H1 (cell line): ENCODE measurements at regions of chr9 and their contacts with region 1.

Region 1: GRCh38 chr9:127450830-127451724 is at the starts of genes LRSAM1 and RPL12:
- DNase-seq: peak; percentile 91 to 100
- H3K4me3 ChIP-seq: peak within 1 kb of the TSS; percentile 85 to 99 (median 88)
- H3K27ac ChIP-seq: peak within 1 kb of the TSS; percentile 86
- H3K4me1 ChIP-seq: peaks cover 0 to 6% (median 4%) of the 10 kb centered on the region in 4 experiments; a peak in 4 of 7 replicates
- H3K27me3 ChIP-seq: no peaks in the 10 kb centered on the region
- CTCF ChIP-seq: no peak
- EP300 ChIP-seq: no peak
- POLR2A ChIP-seq: peak; percentile 100
- RAD21 ChIP-seq: no peak
- total RNA-seq, gene LRSAM1: 18.3 and 18.8 TPM in 2 replicates
- total RNA-seq, gene RPL12: 1,993 and 2,006 TPM in 2 replicates

Region 2: DNA sequence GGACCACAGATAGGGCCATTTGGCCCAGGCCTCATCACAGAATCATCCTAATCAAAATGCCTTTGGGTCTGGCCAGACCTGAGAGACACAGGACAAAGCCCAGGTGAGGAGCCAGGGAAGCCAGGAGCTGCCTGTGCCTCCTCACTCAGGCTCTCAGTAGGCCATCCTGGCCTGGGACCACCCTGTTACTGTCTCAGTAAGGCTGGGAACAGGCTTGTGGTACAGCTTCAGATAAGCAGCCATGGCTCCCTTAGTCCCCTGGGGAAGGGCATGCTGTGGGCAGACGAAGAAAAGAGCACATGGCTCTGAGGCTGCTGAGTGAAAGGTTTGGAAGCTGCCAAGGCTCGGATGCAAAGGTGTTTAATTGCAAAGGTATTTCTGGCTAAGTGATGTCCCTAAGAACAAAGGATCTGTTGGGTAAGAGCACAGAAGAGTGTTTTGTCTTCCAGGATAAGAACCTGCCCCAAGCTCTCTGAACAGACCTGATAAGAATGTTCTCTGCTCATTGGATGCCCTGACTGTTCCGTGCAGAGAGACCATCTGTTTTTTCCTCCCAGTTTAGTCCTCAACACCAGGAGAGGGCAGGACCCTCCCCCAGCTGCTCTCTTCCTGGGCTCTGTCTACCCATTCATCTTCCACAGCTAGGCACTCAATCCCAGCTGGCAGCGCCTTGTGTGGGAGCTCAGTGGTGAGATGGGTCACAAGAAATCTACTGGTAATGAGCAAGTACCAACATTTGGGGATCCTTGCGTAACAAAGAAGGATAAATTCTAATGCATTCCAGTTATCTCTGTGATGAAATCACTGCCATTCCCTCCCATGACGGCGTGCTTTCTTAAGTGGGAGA is 346.4 kb before region 1 on chr9:
- CTCF ChIA-PET with region 1: no interaction called
- POLR2A ChIA-PET with region 1: no interaction called
- DNase-seq: no peak
- H3K4me3 ChIP-seq: no peak overlapping the region
- H3K27ac ChIP-seq: no peak overlapping the region
- H3K4me1 ChIP-seq: no peaks in the 10 kb centered on the region; a peak in 1 of 7 replicates
- H3K27me3 ChIP-seq: no peaks in the 10 kb centered on the region
- CTCF ChIP-seq: no peak
- EP300 ChIP-seq: no peak
- POLR2A ChIP-seq: no peak
- RAD21 ChIP-seq: no peak

Region 3: GRCh38 chr9:127224178-127224882 is 226.7 kb before region 1 on chr9:
- CTCF ChIA-PET with region 1: no interaction called
- POLR2A ChIA-PET with region 1: interaction called, 12 read pairs
- DNase-seq: peak; percentile 94 to 100
- H3K4me3 ChIP-seq: peak overlapping the region; percentile 55 to 80 (median 76)
- H3K27ac ChIP-seq: peak overlapping the region; percentile 80; the same call in 1 of the 2 replicates
- H3K4me1 ChIP-seq: peaks cover 0 to 13% (median 8%) of the 10 kb centered on the region in 4 experiments; a peak in 5 of 7 replicates
- H3K27me3 ChIP-seq: peaks cover 2 to 15% (median 13%) of the 10 kb centered on the region in 4 experiments; a peak in 6 of 7 replicates
- CTCF ChIP-seq: no peak
- EP300 ChIP-seq: no peak
- POLR2A ChIP-seq: peak; percentile 37 to 72; a peak in 2 of 3 replicates
- RAD21 ChIP-seq: peak in 1 of 2 experiments; percentile 24; a peak in 2 of 4 replicates

Region 4: DNA sequence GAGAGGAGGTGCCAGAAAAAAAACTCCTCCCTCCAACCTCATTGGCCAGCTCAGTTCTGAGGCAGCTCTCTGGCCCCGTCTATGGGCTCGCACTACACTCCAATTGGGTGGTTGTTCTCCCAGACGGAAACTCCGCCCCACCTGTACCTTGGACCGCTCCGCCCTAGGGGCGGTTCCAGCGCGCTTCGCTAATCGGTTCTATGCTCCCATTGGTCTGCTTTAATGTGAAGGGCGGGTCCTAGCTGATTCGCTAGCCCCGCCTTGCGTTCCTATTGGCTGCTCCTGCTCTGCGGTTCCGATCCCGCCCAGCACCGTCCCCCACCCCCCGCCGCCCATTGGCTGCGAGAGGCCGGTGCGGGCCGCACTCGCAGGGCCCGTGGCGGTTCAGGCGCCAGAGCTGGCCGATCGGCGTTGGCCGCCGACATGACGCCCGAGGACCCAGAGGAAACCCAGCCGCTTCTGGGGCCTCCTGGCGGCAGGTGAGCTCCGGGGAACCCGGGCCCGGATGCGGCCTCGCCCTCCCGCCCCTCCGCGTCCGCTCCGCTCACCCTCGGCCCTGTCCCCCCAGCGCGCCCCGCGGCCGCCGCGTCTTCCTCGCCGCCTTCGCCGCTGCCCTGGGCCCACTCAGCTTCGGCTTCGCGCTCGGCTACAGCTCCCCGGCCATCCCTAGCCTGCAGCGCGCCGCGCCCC is 54.1 kb before region 1 on chr9 and contains the start of gene SLC2A8:
- CTCF ChIA-PET with region 1: interaction called, 4 read pairs
- POLR2A ChIA-PET with region 1: interaction called, 24 read pairs
- DNase-seq: peak; percentile 97 to 99
- H3K4me3 ChIP-seq: peak within 1 kb of the TSS; percentile 68 to 90 (median 80)
- H3K27ac ChIP-seq: peak within 1 kb of the TSS; percentile 35; the same call in 1 of the 2 replicates
- H3K4me1 ChIP-seq: peaks cover 0 to 15% (median 6%) of the 10 kb centered on the region in 4 experiments; a peak in 6 of 7 replicates
- H3K27me3 ChIP-seq: peaks cover 0 to 6% (median 0%) of the 10 kb centered on the region in 4 experiments; a peak in 3 of 7 replicates
- CTCF ChIP-seq: 0 out of 4 replicates have a peak, but pooled peaks of 1 of the 3 experiments have one; percentile 6
- EP300 ChIP-seq: no peak
- POLR2A ChIP-seq: peak in 1 of 2 experiments; percentile 55; a peak in 2 of 3 replicates
- RAD21 ChIP-seq: peak in 1 of 2 experiments; percentile 25; a peak in 1 of 4 replicates
- total RNA-seq, gene SLC2A8: 24.6 and 25.6 TPM in 2 replicates

Region 5: GRCh38 chr9:127423934-127424675 is 27.0 kb before region 1 on chr9 and contains the start of gene ZNF79:
- CTCF ChIA-PET with region 1: no interaction called
- POLR2A ChIA-PET with region 1: interaction called, 59 read pairs
- DNase-seq: peak; percentile 82 to 95
- H3K4me3 ChIP-seq: peak within 1 kb of the TSS; percentile 87 to 96 (median 94)
- H3K27ac ChIP-seq: peak within 1 kb of the TSS; percentile 94
- H3K4me1 ChIP-seq: peaks cover 0 to 12% (median 6%) of the 10 kb centered on the region in 4 experiments; a peak in 5 of 7 replicates
- H3K27me3 ChIP-seq: no peaks in the 10 kb centered on the region
- CTCF ChIP-seq: no peak
- EP300 ChIP-seq: no peak
- POLR2A ChIP-seq: peak; percentile 80 to 92
- RAD21 ChIP-seq: no peak
- total RNA-seq, gene ZNF79: 7.4 and 7.6 TPM in 2 replicates

Region 6: GRCh38 chr9:127463911-127464310 is 12.8 kb after region 1 on chr9:
- CTCF ChIA-PET with region 1: interaction called, 6 read pairs
- POLR2A ChIA-PET with region 1: interaction called, 64 read pairs
- DNase-seq: no peak
- H3K4me3 ChIP-seq: no peak overlapping the region
- H3K27ac ChIP-seq: no peak overlapping the region
- H3K4me1 ChIP-seq: no peaks in the 10 kb centered on the region
- H3K27me3 ChIP-seq: no peaks in the 10 kb centered on the region; a peak in 1 of 7 replicates
- CTCF ChIP-seq: no peak
- EP300 ChIP-seq: no peak
- POLR2A ChIP-seq: no peak
- RAD21 ChIP-seq: no peak

Region 7: DNA sequence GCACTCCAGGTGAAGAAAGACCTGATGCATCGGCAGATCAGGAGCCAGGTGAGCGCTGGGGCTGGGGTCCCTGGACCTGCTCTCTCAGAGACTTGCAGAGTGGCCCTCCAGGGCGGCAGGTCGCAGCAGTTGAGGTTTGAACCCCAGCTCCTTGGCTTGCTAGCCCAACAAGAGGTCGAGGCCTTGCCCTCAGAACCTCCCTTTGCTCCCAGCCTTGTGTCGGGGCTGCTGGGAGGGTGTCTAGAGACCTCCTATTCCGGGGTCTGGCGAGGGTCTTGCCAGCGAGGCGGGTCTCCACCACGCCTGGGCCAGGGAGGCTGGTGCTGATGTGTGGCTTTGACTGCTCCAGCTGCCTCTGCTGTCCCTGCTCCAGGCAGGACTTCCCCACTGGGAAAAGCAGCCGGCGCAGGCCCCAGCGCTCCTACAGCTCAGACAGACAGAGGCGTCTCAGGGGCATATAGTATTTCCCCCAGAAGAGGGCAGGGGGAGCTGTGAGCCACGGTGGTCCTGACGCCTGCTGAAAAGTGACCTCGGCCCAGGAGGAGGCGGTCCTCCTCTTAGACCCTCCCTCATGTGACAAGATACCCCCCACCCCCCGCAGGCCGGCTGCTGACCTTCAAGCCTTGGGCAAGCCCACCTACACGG is 38.5 kb after region 1 on chr9:
- CTCF ChIA-PET with region 1: interaction called, 5 read pairs
- POLR2A ChIA-PET with region 1: interaction called, 16 read pairs
- DNase-seq: peak; percentile 64 to 79
- H3K4me3 ChIP-seq: no peak overlapping the region
- H3K27ac ChIP-seq: 0 out of 2 replicates have a peak overlapping the region, but pooled peaks have one; percentile 37
- H3K4me1 ChIP-seq: peaks cover 0 to 7% (median 2%) of the 10 kb centered on the region in 4 experiments; a peak in 5 of 7 replicates
- H3K27me3 ChIP-seq: no peaks in the 10 kb centered on the region
- CTCF ChIP-seq: peak; percentile 69 to 77 (median 72)
- EP300 ChIP-seq: no peak
- POLR2A ChIP-seq: no peak
- RAD21 ChIP-seq: peak; percentile 53 to 67

Region 8: DNA sequence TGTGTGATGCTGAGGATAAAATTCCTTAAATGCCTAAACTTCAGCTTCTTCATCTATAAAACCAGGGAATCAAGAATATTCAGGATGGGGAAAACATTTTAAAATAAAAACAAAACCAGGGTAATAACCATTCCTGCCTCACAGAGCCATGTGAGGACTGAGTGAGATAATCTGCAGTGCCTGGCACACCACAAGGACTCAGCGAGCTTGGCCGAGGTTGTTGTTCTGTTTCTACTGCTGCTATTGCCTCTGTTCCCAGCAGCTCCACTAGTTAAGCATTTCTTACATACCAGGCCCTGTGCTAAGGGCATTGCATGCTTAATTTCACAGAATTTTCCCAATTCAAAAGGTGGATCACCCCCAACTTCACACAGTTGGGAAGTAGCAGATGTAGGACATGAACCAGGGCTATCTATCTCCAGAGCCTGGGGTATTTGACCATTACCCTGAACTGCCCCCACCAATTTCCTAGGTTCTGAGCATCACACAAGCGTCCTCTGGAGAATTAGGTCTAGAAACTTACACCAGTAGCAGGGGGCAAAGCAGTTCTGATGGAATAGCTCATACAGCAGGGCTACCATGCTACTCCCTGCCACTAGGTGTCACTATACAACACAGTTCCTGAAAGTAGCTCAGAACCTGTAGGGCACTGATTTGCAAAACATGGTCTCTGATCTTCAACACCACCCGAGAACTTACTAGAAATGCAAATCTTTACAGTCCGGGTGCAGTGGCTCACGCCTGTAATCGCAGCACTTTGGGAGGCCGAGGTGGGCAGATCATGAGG is 74.5 kb after region 1 on chr9:
- CTCF ChIA-PET with region 1: interaction called, 3 read pairs
- POLR2A ChIA-PET with region 1: interaction called, 12 read pairs
- DNase-seq: no peak
- H3K4me3 ChIP-seq: no peak overlapping the region
- H3K27ac ChIP-seq: no peak overlapping the region
- H3K4me1 ChIP-seq: peaks cover 6 to 31% (median 11%) of the 10 kb centered on the region in 4 experiments
- H3K27me3 ChIP-seq: no peaks in the 10 kb centered on the region
- CTCF ChIP-seq: peak in 2 of 3 experiments; percentile 64 to 80; a peak in 3 of 4 replicates
- EP300 ChIP-seq: no peak
- POLR2A ChIP-seq: no peak
- RAD21 ChIP-seq: peak; percentile 54 to 61

Region 9: GRCh38 chr9:127679506-127679905 is 228.4 kb after region 1 on chr9:
- CTCF ChIA-PET with region 1: no interaction called
- POLR2A ChIA-PET with region 1: no interaction called
- DNase-seq: no peak
- H3K4me3 ChIP-seq: no peak overlapping the region
- H3K27ac ChIP-seq: no peak overlapping the region
- H3K4me1 ChIP-seq: no peaks in the 10 kb centered on the region
- H3K27me3 ChIP-seq: no peaks in the 10 kb centered on the region
- CTCF ChIP-seq: no peak
- EP300 ChIP-seq: no peak
- POLR2A ChIP-seq: no peak
- RAD21 ChIP-seq: no peak

Region 10: GRCh38 chr9:127698985-127699670 is 248.1 kb after region 1 on chr9:
- CTCF ChIA-PET with region 1: no interaction called
- POLR2A ChIA-PET with region 1: no interaction called
- DNase-seq: peak; percentile 85 to 94
- H3K4me3 ChIP-seq: peak overlapping the region; percentile 26 to 59 (median 44)
- H3K27ac ChIP-seq: no peak overlapping the region
- H3K4me1 ChIP-seq: no peaks in the 10 kb centered on the region
- H3K27me3 ChIP-seq: no peaks in the 10 kb centered on the region; a peak in 2 of 7 replicates
- CTCF ChIP-seq: no peak
- EP300 ChIP-seq: no peak
- POLR2A ChIP-seq: peak in 1 of 2 experiments; percentile 68; a peak in 2 of 3 replicates
- RAD21 ChIP-seq: no peak